PC-9 (cell line): ENCODE measurements at regions of chr4 and their contacts with region 1.

Region 1: DNA sequence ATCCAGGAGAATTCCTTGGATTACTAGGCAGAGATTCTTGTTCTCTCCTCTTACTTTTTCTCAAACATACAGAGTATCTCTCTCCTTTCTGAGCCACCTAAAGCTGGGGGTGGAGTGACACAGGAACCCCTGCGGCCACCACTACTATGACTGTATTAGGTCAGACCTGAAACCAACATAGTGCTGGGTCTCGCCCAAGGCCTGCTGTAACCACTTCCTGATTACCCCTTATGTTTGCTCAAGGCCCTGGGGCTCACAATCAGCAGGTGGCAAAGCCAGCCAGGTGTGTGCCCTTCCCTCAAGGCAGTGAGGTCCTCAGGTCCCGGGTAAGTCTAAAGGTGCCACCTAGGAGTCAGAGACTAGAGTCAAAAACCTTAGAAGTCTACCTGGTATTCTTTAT is 166.4 kb downstream of the PARM1 start:
- DNase-seq: peak; percentile 31 to 91
- H3K4me3 ChIP-seq: no peak overlapping the region; the same call in 1 of the 2 replicates
- H3K27ac ChIP-seq: peak overlapping the region; percentile 65
- H3K4me1 ChIP-seq: peaks cover 24% of the 10 kb centered on the region
- H3K27me3 ChIP-seq: no peaks in the 10 kb centered on the region
- CTCF ChIP-seq: no peak

Region 2: GRCh38 chr4:75180790-75181776 is 81.8 kb after region 1 on chr4:
- CTCF ChIA-PET with region 1: interaction called, 12 read pairs
- POLR2A ChIA-PET with region 1: no interaction called
- intact Hi-C with region 1: no loop called
- DNase-seq: peak; percentile 64 to 75
- H3K4me3 ChIP-seq: peak overlapping the region; percentile 49
- H3K27ac ChIP-seq: peak overlapping the region; percentile 93
- H3K4me1 ChIP-seq: peaks cover 28% of the 10 kb centered on the region
- H3K27me3 ChIP-seq: no peaks in the 10 kb centered on the region
- CTCF ChIP-seq: no peak

Region 3: GRCh38 chr4:75370576-75370975 is 271.3 kb after region 1 on chr4:
- CTCF ChIA-PET with region 1: no interaction called
- POLR2A ChIA-PET with region 1: no interaction called
- intact Hi-C with region 1: no loop called
- DNase-seq: no peak
- H3K4me3 ChIP-seq: no peak overlapping the region
- H3K27ac ChIP-seq: no peak overlapping the region
- H3K4me1 ChIP-seq: no peaks in the 10 kb centered on the region
- H3K27me3 ChIP-seq: no peaks in the 10 kb centered on the region
- CTCF ChIP-seq: no peak